K562 (cell line): ENCODE measurements at regions of chr19 and their contacts with region 1.

Region 1: GRCh38 chr19:18340190-18340989 is at the start of gene PGPEP1:
- DNase-seq: peak; percentile 86 to 97 (median 94)
- ATAC-seq: peak; percentile 76
- H3K4me3 ChIP-seq: peak within 1 kb of the TSS; percentile 97
- H3K27ac ChIP-seq: peak within 1 kb of the TSS; percentile 92
- H3K4me1 ChIP-seq: peaks cover 9 to 40% of the 10 kb centered on the region in 2 experiments; a peak in 4 of 5 replicates
- H3K27me3 ChIP-seq: no peaks in the 10 kb centered on the region
- CTCF ChIP-seq: no peak
- EP300 ChIP-seq: no peak
- POLR2A ChIP-seq: peak; percentile 71
- RAD21 ChIP-seq: no peak
- polyA plus RNA-seq, gene PGPEP1: 10.0 to 13.4 TPM

Region 2: DNA sequence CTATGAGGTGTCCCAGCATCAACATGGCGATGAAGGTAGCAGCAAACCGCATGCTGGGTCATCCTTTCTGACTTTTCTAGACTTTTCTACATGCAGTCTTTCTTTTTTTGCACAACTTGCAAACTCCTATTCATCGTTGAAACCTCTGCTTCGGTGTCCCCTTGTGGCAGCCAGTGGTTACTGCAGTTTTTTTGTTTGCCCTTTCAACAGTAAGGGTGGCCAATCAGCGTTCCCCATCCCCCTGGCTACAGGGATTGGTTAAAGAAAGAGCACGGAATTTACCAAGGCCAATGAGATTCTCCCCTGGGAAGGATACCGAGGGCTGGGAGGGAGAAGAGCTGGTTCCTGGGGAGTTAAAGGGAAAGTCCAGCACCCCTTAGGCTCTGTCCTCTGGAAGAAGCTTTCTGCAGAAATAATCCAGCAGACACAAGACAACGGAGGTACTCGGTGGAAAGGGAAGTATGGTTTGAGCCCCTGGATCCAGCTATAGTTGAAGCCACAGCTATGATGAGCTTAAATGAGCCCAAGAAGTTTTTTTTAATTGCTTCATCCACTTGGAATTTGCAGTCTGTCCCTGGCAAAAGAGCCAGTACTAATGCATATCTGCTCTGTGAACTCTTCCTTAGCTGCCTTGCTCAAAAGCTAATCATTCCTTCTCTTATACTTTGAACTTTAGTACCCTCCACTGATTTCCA is 11.9 kb before region 1 on chr19:
- CTCF ChIA-PET with region 1: interaction called, 3 read pairs
- POLR2A ChIA-PET with region 1: interaction called, 19 read pairs
- in situ Hi-C with region 1: no loop called
- intact Hi-C with region 1: no loop called
- DNase-seq: peak; percentile 96 to 99 (median 98)
- ATAC-seq: peak; percentile 100
- H3K4me3 ChIP-seq: peak overlapping the region; percentile 33
- H3K27ac ChIP-seq: peak overlapping the region; percentile 63
- H3K4me1 ChIP-seq: peaks cover 22 to 35% of the 10 kb centered on the region in 2 experiments
- H3K27me3 ChIP-seq: no peaks in the 10 kb centered on the region
- CTCF ChIP-seq: peak; percentile 87 to 97 (median 96)
- EP300 ChIP-seq: no peak
- POLR2A ChIP-seq: no peak; the same call in 1 of the 2 replicates
- RAD21 ChIP-seq: peak; percentile 85 to 87

Region 3: DNA sequence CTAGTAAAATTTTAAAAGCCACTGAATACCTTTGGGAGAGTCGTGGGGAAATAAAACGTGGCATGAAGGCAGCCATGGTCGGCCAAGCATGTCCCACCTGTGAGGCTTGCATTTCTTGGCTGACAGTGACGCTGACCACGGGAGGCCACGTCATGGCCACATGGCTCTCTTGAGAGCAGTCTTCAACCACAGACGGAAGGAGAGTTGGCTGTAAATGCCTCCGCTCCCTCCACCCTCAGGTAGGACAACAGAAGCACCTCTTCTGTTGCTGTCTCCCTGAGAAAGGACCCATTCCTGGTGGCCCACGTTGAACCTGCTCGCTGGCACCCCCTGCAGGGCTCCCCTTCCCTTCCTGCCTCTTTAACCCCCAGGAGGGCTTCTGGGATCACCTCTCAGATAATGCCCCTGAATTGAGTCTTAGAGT is 67.7 kb after region 1 on chr19:
- CTCF ChIA-PET with region 1: no interaction called
- POLR2A ChIA-PET with region 1: no interaction called
- in situ Hi-C with region 1: loop called (anchors 5 kb)
- intact Hi-C with region 1: loop called (anchors 2 kb)
- DNase-seq: peak; percentile 63 to 81 (median 72)
- ATAC-seq: peak; percentile 86
- H3K4me3 ChIP-seq: no peak overlapping the region
- H3K27ac ChIP-seq: peak overlapping the region; percentile 39; the same call in 1 of the 3 replicates
- H3K4me1 ChIP-seq: peaks cover 3 to 25% of the 10 kb centered on the region in 2 experiments; a peak in 3 of 5 replicates
- H3K27me3 ChIP-seq: no peaks in the 10 kb centered on the region
- CTCF ChIP-seq: peak; percentile 82 to 89 (median 86)
- EP300 ChIP-seq: no peak
- POLR2A ChIP-seq: no peak
- RAD21 ChIP-seq: peak; percentile 55 to 89